ENCODE measurements at regions of chr14 and their contacts with region 1.

Region 1: DNA sequence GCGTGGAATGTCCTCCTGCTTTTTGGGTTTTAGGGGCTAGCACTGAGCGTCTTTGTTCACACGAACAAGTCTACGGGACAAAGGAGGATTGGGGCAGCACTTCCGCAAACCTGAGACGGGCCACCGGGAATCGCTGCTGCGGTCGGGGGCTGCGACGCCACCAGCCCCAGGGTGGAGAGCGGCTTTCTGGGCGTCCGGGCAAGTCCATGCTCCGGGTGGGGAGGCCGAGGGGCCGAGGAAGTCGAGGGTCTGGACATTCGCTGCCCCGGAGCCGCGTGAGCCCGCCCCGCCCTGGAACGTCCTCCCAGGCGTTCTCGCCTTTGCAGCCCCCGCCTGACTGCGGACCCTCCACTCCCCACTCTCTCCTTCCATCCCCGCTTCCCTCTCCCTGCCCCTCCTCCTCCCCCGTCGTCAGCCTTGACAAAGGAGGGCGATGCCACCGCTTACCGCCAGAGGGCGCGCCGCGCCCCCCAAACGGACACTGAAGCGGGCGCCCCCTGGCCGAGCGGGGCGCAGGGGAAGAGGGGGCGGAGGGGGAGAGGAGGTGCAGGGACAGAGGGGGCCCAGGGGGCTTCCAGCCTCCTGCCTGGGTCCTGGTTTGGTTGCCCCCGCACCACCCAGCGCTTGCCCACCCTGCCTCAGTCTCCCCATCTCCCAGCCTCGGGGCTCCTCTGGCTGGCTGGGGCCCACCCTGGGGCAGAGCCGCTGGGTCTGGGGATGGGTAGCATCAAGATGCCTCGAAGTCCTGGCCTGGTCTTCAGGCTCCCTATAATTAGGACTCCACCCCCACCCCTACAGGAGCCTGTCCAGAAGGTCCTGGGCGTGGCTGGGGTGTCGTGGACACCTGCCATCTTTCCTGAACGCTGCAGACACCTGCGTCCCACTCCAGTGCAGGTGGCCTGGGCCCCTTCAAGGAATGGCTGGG is 39.1 kb upstream of the INF2 start:
- DNase-seq: peak; percentile 83
- ATAC-seq: peak; percentile 89

Region 2: GRCh38 chr14:103801459-103801858 is 848.9 kb before region 1 on chr14:
- intact Hi-C with region 1: no loop called
- DNase-seq: no peak
- ATAC-seq: peak; percentile 70

Region 3: DNA sequence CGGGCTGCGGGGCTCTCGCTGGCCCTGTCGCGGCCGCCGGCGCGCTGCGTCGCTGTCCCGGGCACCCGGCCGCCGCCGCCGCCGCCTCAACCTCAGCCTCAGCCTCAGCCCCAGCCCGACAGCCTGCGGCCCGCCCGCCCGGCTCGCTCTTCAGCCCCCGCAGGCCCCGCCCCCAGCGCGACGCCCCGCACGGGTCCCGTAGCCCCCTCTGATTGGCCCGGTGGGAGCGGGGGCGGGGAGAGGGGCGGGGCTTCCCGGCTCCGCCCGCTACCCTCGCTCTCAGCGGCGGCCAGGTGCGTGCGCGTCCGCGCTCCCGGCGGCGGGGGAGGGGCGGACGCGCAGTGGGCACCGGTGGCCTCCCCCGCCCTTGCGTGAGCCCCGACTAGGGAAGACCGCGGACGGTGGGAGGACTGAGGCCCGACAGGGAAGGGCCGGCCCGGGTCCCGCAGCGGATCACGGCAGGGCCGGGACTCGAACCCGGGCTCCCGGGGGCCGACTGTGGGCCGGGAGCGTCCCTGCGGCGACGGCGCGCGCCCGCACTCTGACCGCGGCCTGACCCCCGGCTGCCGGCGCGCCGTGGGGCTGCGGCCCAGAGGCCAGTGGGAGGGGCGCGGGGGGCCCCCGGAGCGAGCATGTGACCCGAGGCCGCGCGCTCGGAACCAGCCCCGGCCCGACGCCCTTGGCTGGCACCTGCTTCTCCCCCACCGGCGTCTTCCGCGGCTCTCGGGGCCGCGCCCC is 802.7 kb before region 1 on chr14 and contains the start of gene PPP1R13B:
- intact Hi-C with region 1: no loop called
- DNase-seq: peak; percentile 98
- ATAC-seq: peak; percentile 92
- total RNA-seq, gene PPP1R13B: 107 TPM

Region 4: GRCh38 chr14:104120281-104120741 is 530.0 kb before region 1 on chr14:
- intact Hi-C with region 1: no loop called
- DNase-seq: no peak
- ATAC-seq: no peak

Region 5: DNA sequence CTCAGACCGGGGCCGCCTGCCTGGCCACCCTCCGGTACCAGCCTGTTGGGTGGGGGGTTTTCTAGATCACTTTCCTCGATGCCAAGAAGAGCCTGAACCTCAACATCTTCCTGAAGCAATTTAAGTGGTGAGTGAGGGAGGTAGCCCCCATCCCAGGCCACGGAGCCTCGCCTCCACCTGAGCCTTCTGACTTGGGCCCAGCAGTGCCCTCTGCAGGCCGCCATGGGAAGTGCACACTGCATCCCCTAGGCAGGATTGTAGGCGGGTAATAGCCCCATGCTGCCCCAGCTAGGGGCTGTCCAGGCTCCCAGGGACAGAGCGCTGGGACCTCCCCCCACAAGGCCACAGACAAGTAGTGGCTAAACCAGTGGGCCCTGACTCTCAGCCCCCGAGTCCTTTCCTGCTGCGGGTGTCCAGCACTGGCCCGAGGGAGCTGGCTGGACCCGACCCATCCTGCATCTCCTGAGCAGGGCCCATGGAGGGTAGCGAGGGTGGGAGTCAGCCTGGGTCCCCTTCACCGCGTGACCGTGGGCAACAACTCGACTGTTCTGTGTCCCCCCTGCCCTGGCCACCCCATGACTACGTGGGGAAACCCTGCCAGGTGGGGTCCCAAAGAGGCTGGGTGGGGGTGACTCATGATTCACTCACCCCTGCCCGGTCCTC is 58.4 kb after region 1 on chr14:
- intact Hi-C with region 1: loop called (anchors 10 kb)
- DNase-seq: peak; percentile 84
- ATAC-seq: peak; percentile 74

Measured in left ventricle myocardium superior (tissue), 1 donor.